ENCODE measurements at regions of chr9 and their contacts with region 1.

Region 1: DNA sequence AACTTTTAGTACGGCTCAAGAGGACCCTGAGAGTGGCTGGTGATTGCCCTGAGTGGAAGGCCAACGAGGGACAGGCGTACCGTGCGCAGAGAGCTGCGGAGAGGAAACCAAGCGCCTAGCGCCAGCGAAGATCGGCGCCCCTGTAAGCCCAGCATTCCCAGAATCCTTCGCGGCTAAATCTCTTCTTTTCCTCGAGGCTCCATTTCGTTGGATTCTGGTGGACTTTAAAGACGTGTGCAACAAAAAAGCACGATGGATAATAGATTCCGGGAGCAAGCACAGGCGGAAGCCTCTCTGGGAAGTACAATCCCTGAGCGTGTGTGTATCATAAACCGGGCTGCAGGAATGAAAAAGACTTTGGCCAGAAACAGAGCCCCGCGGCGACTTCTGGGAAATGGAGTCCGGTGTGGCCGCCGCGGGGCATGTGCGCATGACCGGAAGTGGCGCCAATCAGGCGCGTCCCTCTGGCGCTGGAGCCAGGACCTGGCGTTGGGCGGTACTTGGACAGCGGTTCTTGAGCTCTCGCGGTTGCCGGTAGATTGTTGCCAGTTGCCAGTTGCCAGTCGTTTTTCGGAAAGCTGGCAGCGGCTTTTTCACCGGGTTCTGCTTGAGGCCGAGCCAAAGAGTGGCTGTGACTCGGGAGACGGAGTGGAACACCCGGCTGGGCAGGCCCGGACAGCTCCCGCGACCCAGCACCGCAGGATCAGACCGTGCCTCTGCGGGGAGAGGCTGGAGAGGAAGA is at the start of gene ZNF79:
- DNase-seq: peak; percentile 94 to 97
- ATAC-seq: peak; percentile 95 to 99 (median 96)
- H3K4me3 ChIP-seq: peak within 1 kb of the TSS; percentile 86
- H3K27ac ChIP-seq: peak within 1 kb of the TSS; percentile 93
- H3K4me1 ChIP-seq: peaks cover 43% of the 10 kb centered on the region
- H3K27me3 ChIP-seq: no peaks in the 10 kb centered on the region
- CTCF ChIP-seq: no peak
- total RNA-seq, gene ZNF79: 4.4 to 10.7 (median 9.1) TPM

Region 2: DNA sequence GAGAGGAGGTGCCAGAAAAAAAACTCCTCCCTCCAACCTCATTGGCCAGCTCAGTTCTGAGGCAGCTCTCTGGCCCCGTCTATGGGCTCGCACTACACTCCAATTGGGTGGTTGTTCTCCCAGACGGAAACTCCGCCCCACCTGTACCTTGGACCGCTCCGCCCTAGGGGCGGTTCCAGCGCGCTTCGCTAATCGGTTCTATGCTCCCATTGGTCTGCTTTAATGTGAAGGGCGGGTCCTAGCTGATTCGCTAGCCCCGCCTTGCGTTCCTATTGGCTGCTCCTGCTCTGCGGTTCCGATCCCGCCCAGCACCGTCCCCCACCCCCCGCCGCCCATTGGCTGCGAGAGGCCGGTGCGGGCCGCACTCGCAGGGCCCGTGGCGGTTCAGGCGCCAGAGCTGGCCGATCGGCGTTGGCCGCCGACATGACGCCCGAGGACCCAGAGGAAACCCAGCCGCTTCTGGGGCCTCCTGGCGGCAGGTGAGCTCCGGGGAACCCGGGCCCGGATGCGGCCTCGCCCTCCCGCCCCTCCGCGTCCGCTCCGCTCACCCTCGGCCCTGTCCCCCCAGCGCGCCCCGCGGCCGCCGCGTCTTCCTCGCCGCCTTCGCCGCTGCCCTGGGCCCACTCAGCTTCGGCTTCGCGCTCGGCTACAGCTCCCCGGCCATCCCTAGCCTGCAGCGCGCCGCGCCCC is 27.2 kb before region 1 on chr9 and contains the start of gene SLC2A8:
- intact Hi-C with region 1: loop called in 1 of 2 experiments (anchors 2 kb)
- DNase-seq: peak; percentile 98 to 99
- ATAC-seq: peak; percentile 94 to 97 (median 96)
- H3K4me3 ChIP-seq: peak within 1 kb of the TSS; percentile 94
- H3K27ac ChIP-seq: peak within 1 kb of the TSS; percentile 89
- H3K4me1 ChIP-seq: peaks cover 13% of the 10 kb centered on the region
- H3K27me3 ChIP-seq: no peaks in the 10 kb centered on the region
- CTCF ChIP-seq: peak; percentile 29
- total RNA-seq, gene SLC2A8: 15.8 to 18.7 (median 16.3) TPM

Region 3: GRCh38 chr9:127450830-127451724 is 27.0 kb after region 1 on chr9 and contains the starts of genes LRSAM1 and RPL12:
- intact Hi-C with region 1: loop called in 1 of 2 experiments (anchors 2 kb)
- DNase-seq: peak; percentile 96 to 99
- ATAC-seq: peak; percentile 82 to 90 (median 83)
- H3K4me3 ChIP-seq: peak within 1 kb of the TSS; percentile 96
- H3K27ac ChIP-seq: peak within 1 kb of the TSS; percentile 91
- H3K4me1 ChIP-seq: peaks cover 43% of the 10 kb centered on the region
- H3K27me3 ChIP-seq: no peaks in the 10 kb centered on the region
- CTCF ChIP-seq: no peak
- total RNA-seq, gene LRSAM1: 8.3 to 17.7 (median 13.8) TPM
- total RNA-seq, gene RPL12: 748 to 1,111 (median 831) TPM

Region 4: DNA sequence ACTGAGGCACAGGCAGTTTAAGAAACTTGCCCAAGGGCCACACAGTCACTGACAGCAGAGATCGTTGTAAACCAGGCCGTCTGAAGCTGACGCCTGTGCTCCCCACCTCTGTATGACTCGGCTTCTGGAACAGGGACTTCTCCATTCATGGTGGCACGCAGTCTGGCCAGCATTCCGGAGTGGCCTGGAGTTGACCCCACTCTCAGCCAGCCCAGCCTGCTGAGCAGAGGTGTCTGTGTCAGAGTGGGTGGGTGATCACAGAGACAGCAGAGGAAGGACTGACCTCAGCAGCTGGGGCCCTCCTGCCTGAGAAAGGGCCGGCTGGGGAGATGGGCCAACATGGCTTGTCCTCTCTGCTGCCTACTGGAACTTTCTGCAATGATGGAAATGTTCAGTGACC is 39.8 kb after region 1 on chr9:
- intact Hi-C with region 1: no loop called
- DNase-seq: peak in 1 of 2 donors; percentile 61
- ATAC-seq: peak; percentile 63 to 90 (median 75)
- H3K4me3 ChIP-seq: no peak overlapping the region
- H3K27ac ChIP-seq: peak overlapping the region; percentile 46
- H3K4me1 ChIP-seq: no peaks in the 10 kb centered on the region
- H3K27me3 ChIP-seq: no peaks in the 10 kb centered on the region
- CTCF ChIP-seq: no peak

Measured in psoas muscle (tissue), 8 donors.